Spleen (tissue), 13 donors: ENCODE measurements at regions of chr9 and their contacts with region 1.

Region 1: GRCh38 chr9:70340572-70340971 is 73.9 kb downstream of the KLF9 start:
- DNase-seq: no peak
- H3K4me3 ChIP-seq: no peak overlapping the region
- H3K27ac ChIP-seq: no peak overlapping the region
- H3K4me1 ChIP-seq: peaks cover 0 to 10% (median 0%) of the 10 kb centered on the region in 6 donors
- H3K27me3 ChIP-seq: no peaks in the 10 kb centered on the region
- CTCF ChIP-seq: peak in 10 of 11 experiments; percentile 20 to 66 (median 51)
- POLR2A ChIP-seq: no peak

Region 2: GRCh38 chr9:70278312-70278711 is 62.3 kb before region 1 on chr9:
- intact Hi-C with region 1: no loop called
- DNase-seq: no peak
- H3K4me3 ChIP-seq: no peak overlapping the region
- H3K27ac ChIP-seq: no peak overlapping the region
- H3K4me1 ChIP-seq: peaks cover 0 to 13% (median 0%) of the 10 kb centered on the region in 6 donors
- H3K27me3 ChIP-seq: no peaks in the 10 kb centered on the region
- CTCF ChIP-seq: no peak
- POLR2A ChIP-seq: no peak

Region 3: GRCh38 chr9:70451765-70452164 is 111.2 kb after region 1 on chr9:
- intact Hi-C with region 1: no loop called
- DNase-seq: no peak
- H3K4me3 ChIP-seq: no peak overlapping the region
- H3K27ac ChIP-seq: no peak overlapping the region
- H3K4me1 ChIP-seq: no peaks in the 10 kb centered on the region
- H3K27me3 ChIP-seq: no peaks in the 10 kb centered on the region
- CTCF ChIP-seq: no peak
- POLR2A ChIP-seq: no peak

Region 4: DNA sequence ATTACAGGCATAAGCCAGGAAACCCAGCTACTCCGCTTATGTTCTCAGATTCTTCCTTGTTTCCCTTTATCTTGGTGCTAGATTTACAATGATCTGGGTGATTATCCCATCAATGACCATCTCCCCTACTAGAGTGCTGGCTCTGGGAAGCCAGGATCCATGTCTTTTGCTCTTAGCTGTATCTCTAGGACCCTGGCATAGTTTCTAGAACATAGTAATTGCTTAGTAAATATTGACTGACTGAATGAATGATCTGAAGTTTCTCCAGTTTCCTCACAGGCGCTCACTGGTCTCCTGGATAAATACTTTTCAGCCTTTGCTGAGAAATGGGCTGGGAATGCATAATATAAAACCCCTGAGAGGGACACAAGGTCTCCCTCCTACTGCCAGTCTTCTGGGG is 133.8 kb after region 1 on chr9:
- intact Hi-C with region 1: no loop called
- DNase-seq: no peak
- H3K4me3 ChIP-seq: no peak overlapping the region
- H3K27ac ChIP-seq: peak overlapping the region in 5 of 8 donors; percentile 13 to 73 (median 55)
- H3K4me1 ChIP-seq: peaks cover 0 to 31% (median 13%) of the 10 kb centered on the region in 6 donors
- H3K27me3 ChIP-seq: no peaks in the 10 kb centered on the region
- CTCF ChIP-seq: no peak
- POLR2A ChIP-seq: no peak

Region 5: GRCh38 chr9:70602321-70603019 is 261.9 kb after region 1 on chr9:
- intact Hi-C with region 1: loop called (anchors 5 kb)
- DNase-seq: no peak
- H3K4me3 ChIP-seq: no peak overlapping the region
- H3K27ac ChIP-seq: peak overlapping the region in 7 of 8 donors; percentile 43 to 78 (median 68)
- H3K4me1 ChIP-seq: peaks cover 0 to 18% (median 7%) of the 10 kb centered on the region in 6 donors
- H3K27me3 ChIP-seq: no peaks in the 10 kb centered on the region
- CTCF ChIP-seq: peak in 10 of 11 experiments; percentile 39 to 84 (median 68)
- POLR2A ChIP-seq: no peak